Panc1 (cell line): ENCODE measurements at regions of chrX and their contacts with region 1.

Region 1: GRCh38 chrX:140664939-140665338 is 44.6 kb upstream of the LINC00632 start:
- DNase-seq: peak; percentile 22
- ATAC-seq: peak; percentile 75
- H3K4me3 ChIP-seq: no peak overlapping the region
- H3K27ac ChIP-seq: no peak overlapping the region
- H3K4me1 ChIP-seq: no peaks in the 10 kb centered on the region
- H3K27me3 ChIP-seq: no peaks in the 10 kb centered on the region
- CTCF ChIP-seq: peak; percentile 45; the same call in 1 of the 2 replicates

Region 2: GRCh38 chrX:140057001-140057411 is 607.9 kb before region 1 on chrX:
- CTCF ChIA-PET with region 1: no interaction called
- POLR2A ChIA-PET with region 1: no interaction called
- in situ Hi-C with region 1: no loop called
- intact Hi-C with region 1: loop called (anchors 2 kb)
- DNase-seq: peak; percentile 62
- ATAC-seq: peak; percentile 99
- H3K4me3 ChIP-seq: peak overlapping the region in 1 of 2 experiments; percentile 39; a peak in 2 of 4 replicates
- H3K27ac ChIP-seq: no peak overlapping the region
- H3K4me1 ChIP-seq: no peaks in the 10 kb centered on the region
- H3K27me3 ChIP-seq: peaks cover 5% of the 10 kb centered on the region; the same call in 1 of the 2 replicates
- CTCF ChIP-seq: peak; percentile 92

Region 3: DNA sequence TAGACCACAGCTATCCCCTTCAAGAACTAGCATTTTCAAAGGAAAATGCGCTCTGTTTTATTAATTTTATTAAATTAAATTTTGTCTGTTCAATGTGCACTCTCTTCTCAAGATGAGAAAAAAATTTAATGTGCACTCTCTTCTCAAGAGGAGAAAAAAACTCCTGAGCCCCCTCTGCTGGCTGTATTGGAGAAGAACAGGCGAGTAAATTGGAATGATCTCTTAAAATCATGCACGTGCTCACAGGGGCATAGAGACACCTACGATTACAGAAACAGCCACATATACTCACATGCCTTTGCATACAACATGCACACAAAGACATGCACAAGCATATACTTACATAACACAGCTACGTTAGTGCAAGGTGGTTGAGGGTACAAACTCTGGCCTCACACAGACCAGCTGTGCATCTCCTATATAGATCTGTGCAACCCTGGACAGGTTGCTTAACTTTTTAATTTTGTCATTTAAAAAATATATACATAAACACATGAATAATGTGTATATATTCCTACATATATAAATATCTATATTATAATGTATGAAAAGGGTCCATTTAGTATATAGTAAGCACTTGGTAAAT is 523.4 kb before region 1 on chrX:
- CTCF ChIA-PET with region 1: no interaction called
- POLR2A ChIA-PET with region 1: no interaction called
- in situ Hi-C with region 1: no loop called
- intact Hi-C with region 1: loop called (anchors 10 kb)
- DNase-seq: peak; percentile 20
- ATAC-seq: no peak; the same call in 1 of the 2 replicates
- H3K4me3 ChIP-seq: no peak overlapping the region
- H3K27ac ChIP-seq: no peak overlapping the region
- H3K4me1 ChIP-seq: no peaks in the 10 kb centered on the region
- H3K27me3 ChIP-seq: no peaks in the 10 kb centered on the region
- CTCF ChIP-seq: peak; percentile 78

Region 4: DNA sequence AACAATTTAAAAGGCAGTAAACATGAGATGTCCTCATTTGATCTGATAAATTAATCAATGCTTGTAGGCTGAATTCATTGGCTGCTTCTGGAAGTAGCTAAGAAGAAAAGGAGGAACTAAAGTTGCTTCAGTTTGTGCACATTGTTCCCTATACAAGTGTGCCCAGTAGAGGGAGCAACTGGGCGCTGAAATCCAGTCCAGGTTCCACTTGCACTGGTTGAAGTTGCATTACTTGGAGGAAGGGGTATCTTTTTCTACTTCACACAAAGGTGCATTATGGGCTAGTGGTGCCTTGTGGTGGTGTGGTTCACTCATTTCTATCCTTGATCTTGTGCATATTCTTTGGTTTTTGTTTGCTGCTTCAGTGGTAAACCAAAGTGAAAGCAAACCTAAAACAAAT is 92.2 kb before region 1 on chrX:
- CTCF ChIA-PET with region 1: no interaction called
- POLR2A ChIA-PET with region 1: no interaction called
- in situ Hi-C with region 1: no loop called
- intact Hi-C with region 1: loop called (anchors 2 kb)
- DNase-seq: peak; percentile 46
- ATAC-seq: peak; percentile 82; the same call in 1 of the 2 replicates
- H3K4me3 ChIP-seq: no peak overlapping the region
- H3K27ac ChIP-seq: no peak overlapping the region
- H3K4me1 ChIP-seq: no peaks in the 10 kb centered on the region; the same call in 1 of the 2 replicates
- H3K27me3 ChIP-seq: no peaks in the 10 kb centered on the region; the same call in 1 of the 2 replicates
- CTCF ChIP-seq: peak; percentile 83

Region 5: GRCh38 chrX:140701480-140701879 is 36.5 kb after region 1 on chrX:
- CTCF ChIA-PET with region 1: no interaction called
- POLR2A ChIA-PET with region 1: interaction called, 15 read pairs
- in situ Hi-C with region 1: no loop called
- intact Hi-C with region 1: no loop called
- DNase-seq: no peak
- ATAC-seq: peak; percentile 70; the same call in 1 of the 2 replicates
- H3K4me3 ChIP-seq: no peak overlapping the region
- H3K27ac ChIP-seq: no peak overlapping the region
- H3K4me1 ChIP-seq: no peaks in the 10 kb centered on the region
- H3K27me3 ChIP-seq: no peaks in the 10 kb centered on the region
- CTCF ChIP-seq: peak; percentile 66; the same call in 1 of the 2 replicates